ENCODE measurements at regions of chr19 and their contacts with region 1.

Region 1: DNA sequence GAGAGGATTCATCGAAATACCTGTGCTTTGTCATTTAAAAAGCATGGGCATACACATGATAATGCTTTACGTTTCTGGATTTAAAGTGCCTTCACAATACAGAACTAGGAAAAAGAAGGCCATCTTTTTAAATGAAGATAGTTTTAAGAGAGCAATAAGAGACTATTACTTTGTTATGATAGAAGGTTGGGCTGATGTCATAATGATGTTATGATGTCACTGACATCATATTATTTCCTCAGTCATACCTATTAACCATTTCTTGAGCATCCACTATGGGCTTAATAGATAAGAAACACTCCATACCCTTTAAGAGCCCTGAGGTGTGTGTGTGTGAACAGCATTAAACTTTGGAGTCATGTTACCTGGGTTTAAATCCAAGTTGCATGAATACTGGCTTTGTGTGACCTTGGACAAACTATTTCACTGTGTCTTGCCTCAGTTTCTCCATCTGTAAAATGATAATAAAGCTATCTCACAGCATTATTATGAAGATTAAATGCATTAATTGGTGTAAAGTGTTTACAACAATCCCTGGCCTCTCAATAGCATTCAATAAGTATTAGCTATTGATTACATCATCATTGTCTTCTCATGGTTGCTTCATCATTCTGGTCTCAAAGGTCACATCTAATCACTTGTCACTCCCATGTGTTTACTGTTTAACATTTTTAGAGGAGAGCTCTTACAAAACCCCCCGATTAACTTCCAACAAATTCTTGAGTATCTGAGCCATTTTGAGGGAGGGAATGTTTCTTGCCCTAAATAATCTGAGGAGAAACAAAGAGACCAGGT is 11.1 kb downstream of the ZNF181 start:
- DNase-seq: no peak
- H3K4me3 ChIP-seq: no peak overlapping the region
- H3K27ac ChIP-seq: no peak overlapping the region
- H3K4me1 ChIP-seq: no peaks in the 10 kb centered on the region
- H3K27me3 ChIP-seq: no peaks in the 10 kb centered on the region
- CTCF ChIP-seq: no peak

Region 2: DNA sequence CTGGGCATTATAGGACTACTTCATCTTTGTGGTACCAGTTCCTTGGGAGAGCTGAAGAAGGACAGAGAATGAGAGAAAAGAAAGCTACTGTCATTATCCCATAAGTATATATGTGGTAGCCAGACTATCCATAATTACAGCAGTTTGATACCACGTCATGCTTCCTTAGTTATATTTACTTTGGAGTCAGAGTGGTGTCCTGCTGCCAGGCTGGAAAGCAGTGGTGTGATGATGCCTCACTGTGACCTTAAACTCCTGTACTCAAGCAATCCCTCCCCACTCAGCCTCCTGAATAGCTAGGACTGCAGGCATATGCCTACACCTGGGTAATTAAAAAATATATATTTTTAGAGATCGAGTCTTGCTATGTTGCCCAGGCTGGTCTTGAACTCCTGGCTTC is 205.7 kb before region 1 on chr19:
- CTCF ChIA-PET with region 1: no interaction called
- dilution Hi-C with region 1: no loop called
- in situ Hi-C with region 1: loop called in 1 of 2 experiments (anchors 5 kb)
- intact Hi-C with region 1: no loop called
- DNase-seq: no peak
- H3K4me3 ChIP-seq: no peak overlapping the region
- H3K27ac ChIP-seq: no peak overlapping the region
- H3K4me1 ChIP-seq: no peaks in the 10 kb centered on the region
- H3K27me3 ChIP-seq: no peaks in the 10 kb centered on the region
- CTCF ChIP-seq: no peak

Region 3: DNA sequence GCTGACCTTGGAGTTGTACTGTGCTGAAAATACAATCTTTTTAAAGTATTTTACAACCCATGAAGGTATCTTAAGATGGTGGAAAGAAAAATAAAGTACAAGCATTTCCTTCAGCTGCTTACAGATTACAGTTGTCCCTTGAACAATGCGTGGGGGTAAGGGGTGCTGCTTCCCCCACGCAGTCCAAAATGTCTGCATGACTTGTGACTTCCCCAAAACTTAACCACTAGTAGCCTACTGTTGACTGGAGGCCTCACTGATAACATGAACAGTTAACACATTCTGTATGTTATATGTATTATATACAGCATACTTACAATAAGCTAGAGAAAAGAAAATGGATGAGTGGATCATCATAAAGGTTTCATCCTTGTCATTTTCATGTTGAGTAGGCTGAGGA is 73.2 kb after region 1 on chr19:
- CTCF ChIA-PET with region 1: no interaction called
- dilution Hi-C with region 1: no loop called
- in situ Hi-C with region 1: no loop called
- intact Hi-C with region 1: no loop called
- DNase-seq: no peak
- H3K4me3 ChIP-seq: no peak overlapping the region
- H3K27ac ChIP-seq: no peak overlapping the region
- H3K4me1 ChIP-seq: no peaks in the 10 kb centered on the region
- H3K27me3 ChIP-seq: no peaks in the 10 kb centered on the region
- CTCF ChIP-seq: no peak

Region 4: DNA sequence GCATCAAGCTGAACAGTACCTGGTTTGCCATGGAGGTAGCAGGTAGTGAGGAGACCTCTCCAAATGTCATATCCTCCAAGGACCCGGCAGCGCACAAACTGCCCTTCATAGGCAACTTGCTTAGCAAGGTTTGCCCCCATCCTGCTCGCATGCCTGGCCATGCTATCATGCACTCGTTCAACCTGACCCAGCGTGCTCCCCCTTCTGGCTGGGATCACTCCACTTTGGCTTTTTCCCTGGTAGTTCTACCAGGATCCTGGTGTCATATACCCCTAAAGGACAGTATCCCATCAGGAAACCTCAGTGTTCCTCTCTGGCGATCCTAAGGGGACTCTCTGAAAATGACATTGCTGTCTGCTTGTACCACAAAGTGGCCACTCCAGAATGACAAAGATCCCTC is 143.0 kb after region 1 on chr19:
- CTCF ChIA-PET with region 1: no interaction called
- dilution Hi-C with region 1: no loop called
- in situ Hi-C with region 1: no loop called
- intact Hi-C with region 1: no loop called
- DNase-seq: no peak
- H3K4me3 ChIP-seq: no peak overlapping the region
- H3K27ac ChIP-seq: no peak overlapping the region
- H3K4me1 ChIP-seq: no peaks in the 10 kb centered on the region
- H3K27me3 ChIP-seq: no peaks in the 10 kb centered on the region
- CTCF ChIP-seq: no peak

Measured in mammary epithelial cell (primary cell).